ENCODE measurements at regions of chr9 and their contacts with region 1.

Region 1: GRCh38 chr9:133090187-133090586 is 28.4 kb downstream of the CEL start:
- DNase-seq: no peak
- ATAC-seq: no peak
- H3K4me3 Mint-ChIP-seq: no peak overlapping the region
- H3K27ac Mint-ChIP-seq: no peak overlapping the region
- H3K4me1 Mint-ChIP-seq: no peaks in the 10 kb centered on the region
- H3K27me3 Mint-ChIP-seq: peaks cover under 1% of the 10 kb centered on the region; the same call in 1 of the 2 replicates
- CTCF ChIP-seq: no peak

Region 2: DNA sequence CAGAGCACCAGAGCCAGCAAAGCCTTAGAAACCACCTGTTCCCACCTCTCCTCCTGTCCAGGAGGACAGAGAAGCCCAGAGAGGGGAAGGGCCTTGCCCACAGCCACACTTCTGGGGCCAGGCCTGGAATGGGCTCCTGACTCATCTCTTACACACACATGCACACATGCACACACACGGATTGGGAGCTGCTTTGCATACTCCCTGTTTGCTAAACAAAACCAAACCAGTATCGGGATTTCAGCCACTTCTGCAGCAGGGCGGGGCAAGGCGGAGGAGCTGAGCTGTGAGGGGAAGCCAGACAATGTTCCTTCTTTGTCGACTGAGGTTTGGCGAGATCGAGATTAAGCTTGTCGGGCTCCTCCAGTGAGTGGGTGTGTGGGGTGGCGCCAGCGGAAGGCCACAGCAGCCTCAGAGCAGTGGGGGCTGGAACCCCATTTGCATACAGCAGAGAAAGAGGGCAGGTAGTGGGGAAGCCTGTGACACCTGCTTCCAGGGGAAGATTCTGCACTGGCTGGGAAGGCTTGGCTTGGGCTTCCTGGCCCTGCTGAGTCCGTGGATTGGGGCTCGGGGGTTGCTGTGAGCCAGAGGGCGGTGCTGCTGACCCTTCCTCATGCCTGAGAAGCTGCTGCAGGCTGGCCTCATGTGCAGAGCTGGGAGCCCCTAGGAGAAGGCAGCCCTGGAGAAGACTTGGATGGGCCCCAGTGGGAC is 95.6 kb before region 1 on chr9:
- CTCF ChIA-PET with region 1: no interaction called
- POLR2A ChIA-PET with region 1: no interaction called
- DNase-seq: no peak
- ATAC-seq: peak; percentile 31
- H3K4me3 Mint-ChIP-seq: no peak overlapping the region
- H3K27ac Mint-ChIP-seq: no peak overlapping the region
- H3K4me1 Mint-ChIP-seq: peaks cover 37% of the 10 kb centered on the region
- H3K27me3 Mint-ChIP-seq: peaks cover 4% of the 10 kb centered on the region; the same call in 1 of the 2 replicates
- CTCF ChIP-seq: no peak

Region 3: DNA sequence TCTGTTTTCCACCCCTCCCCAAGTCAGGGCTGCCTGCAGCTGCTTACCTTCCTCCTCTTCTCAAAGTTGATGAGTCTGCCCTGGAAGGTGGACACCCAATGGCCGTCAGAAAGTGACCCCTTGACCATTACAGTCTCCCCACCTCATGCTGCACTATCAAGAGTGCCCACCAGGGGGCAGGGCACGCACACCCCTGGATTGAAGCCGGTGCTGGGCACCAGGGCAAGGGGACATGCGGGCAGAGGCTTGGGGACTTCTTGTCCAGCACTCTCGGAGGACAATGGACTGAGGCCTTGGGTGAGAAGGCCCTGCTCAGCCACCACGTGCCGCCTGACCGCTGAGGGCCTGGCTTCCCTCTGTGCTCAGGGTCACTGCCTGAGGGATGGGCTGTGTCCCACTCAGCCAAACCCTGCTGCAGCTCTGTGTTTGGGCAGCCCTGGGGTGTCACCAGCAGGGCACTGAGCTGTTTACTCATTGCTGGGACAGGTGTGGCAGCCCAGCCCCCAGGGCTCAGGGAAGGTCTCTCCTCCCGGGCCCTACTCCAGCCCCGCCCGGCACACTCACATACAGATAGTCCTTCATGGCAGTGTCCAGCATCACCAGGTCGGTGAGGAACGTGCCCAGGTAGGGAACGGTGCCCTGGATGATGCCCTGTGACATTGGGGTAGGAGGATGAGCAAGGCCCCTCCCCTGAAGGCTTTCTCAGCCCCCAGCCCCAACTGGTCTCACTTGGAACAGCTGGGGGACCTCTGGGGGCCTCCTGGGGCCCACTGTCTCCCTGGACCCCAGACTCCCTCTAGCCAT is 13.2 kb after region 1 on chr9:
- CTCF ChIA-PET with region 1: interaction called, 10 read pairs
- POLR2A ChIA-PET with region 1: no interaction called
- DNase-seq: peak; percentile 78
- ATAC-seq: peak; percentile 58
- H3K4me3 Mint-ChIP-seq: no peak overlapping the region
- H3K27ac Mint-ChIP-seq: no peak overlapping the region
- H3K4me1 Mint-ChIP-seq: peaks cover 3% of the 10 kb centered on the region
- H3K27me3 Mint-ChIP-seq: no peaks in the 10 kb centered on the region
- CTCF ChIP-seq: peak; percentile 99